ENCODE measurements at regions of chr11 and their contacts with region 1.

Region 1: DNA sequence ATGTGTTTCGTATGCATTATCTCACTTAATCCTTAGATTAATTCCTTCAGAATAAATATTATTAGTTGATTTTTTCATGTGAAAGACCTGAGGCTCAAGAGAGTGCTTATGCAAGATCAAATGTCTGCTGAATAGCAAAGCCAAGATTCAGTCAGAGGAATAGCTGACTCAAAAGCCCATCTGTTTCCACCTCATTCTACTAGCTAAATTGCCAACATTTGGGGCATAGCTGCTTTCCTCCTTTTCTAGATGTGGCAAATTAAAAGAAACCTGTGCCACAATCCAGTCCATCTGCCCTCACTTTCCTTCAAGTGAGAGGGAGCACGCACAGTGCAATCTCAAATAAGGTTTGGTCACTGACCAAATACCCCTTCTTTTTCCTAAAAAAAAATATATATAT is 121.1 kb downstream of the PAX6 start:
- DNase-seq: no peak
- H3K4me3 ChIP-seq: no peak overlapping the region
- H3K27ac ChIP-seq: no peak overlapping the region
- H3K4me1 ChIP-seq: no peaks in the 10 kb centered on the region
- H3K27me3 ChIP-seq: no peaks in the 10 kb centered on the region
- CTCF ChIP-seq: no peak

Region 2: DNA sequence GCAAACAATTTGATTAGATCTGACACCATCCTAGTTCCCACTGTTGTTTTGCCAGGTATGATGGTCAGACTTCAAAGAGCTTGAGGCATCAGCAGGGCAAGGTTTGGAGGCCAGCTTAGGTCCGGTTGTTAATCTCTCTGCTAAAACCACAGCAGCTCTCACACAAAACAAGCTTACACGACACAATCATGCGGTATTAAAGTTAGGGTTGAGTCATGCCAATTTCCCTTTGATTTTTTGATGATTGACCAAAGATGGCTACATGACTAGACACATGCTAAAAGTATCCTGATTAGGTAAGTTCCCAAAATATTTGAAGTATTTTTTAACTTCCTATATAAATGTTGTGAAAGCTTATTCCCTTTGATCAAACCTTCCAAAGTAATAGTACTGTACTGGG is 34.6 kb before region 1 on chr11:
- CTCF ChIA-PET with region 1: no interaction called
- POLR2A ChIA-PET with region 1: interaction called, 34 read pairs
- intact Hi-C with region 1: no loop called
- DNase-seq: no peak
- H3K4me3 ChIP-seq: no peak overlapping the region
- H3K27ac ChIP-seq: no peak overlapping the region
- H3K4me1 ChIP-seq: no peaks in the 10 kb centered on the region
- H3K27me3 ChIP-seq: no peaks in the 10 kb centered on the region
- CTCF ChIP-seq: no peak

Region 3: DNA sequence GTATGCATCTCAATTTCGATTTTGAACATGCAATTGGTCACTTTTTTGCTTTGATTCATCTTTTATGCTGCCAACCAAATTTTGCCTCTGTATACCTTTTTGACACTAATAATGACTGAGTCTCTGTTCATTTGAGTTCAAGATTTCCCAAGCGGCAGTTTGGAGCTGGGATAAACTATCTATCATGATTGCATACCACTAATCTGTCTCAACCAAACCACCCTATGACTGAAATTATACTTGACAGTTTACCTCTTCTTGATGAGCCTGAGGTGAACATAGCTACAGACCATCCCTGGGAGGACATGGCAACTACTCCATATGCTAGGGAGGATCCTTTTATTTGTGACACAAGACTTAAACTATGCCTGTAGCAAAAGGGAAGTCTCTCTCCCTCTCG is 25.1 kb before region 1 on chr11:
- CTCF ChIA-PET with region 1: interaction called, 16 read pairs
- POLR2A ChIA-PET with region 1: no interaction called
- intact Hi-C with region 1: no loop called
- DNase-seq: no peak
- H3K4me3 ChIP-seq: no peak overlapping the region
- H3K27ac ChIP-seq: no peak overlapping the region
- H3K4me1 ChIP-seq: no peaks in the 10 kb centered on the region
- H3K27me3 ChIP-seq: no peaks in the 10 kb centered on the region
- CTCF ChIP-seq: no peak